MCF 10A (cell line): ENCODE measurements at regions of chr14 and their contacts with region 1.

Region 1: GRCh38 chr14:23478111-23478759 is 8.7 kb downstream of the NGDN start:
- DNase-seq: peak; percentile 58
- H3K4me3 Mint-ChIP-seq: no peak overlapping the region
- H3K27ac Mint-ChIP-seq: no peak overlapping the region
- H3K4me1 Mint-ChIP-seq: peaks cover 5% of the 10 kb centered on the region
- H3K27me3 Mint-ChIP-seq: no peaks in the 10 kb centered on the region
- CTCF ChIP-seq: peak; percentile 59

Region 2: DNA sequence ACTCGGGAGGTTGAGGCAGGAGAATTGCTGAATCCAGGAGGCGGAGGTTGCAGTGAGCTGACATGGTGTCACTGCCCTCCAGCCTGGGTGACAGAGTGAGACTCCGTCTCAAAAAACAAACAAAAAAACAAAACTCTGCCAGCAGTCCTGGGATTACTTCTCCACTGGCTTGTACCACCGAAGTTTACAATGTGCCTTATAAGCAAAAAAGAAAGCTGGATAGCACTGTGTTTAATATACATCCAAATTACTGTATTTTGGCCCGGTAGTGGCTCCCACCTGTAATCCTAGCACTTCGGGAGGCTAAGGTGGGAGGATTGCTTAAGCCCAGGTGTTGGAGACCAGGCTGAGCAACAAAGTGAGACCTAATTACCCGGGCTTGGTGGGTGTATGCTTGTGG is 209.0 kb before region 1 on chr14:
- CTCF ChIA-PET with region 1: interaction called, 6 read pairs
- POLR2A ChIA-PET with region 1: no interaction called
- intact Hi-C with region 1: loop called (anchors 5 kb)
- DNase-seq: no peak
- H3K4me3 Mint-ChIP-seq: no peak overlapping the region
- H3K27ac Mint-ChIP-seq: no peak overlapping the region
- H3K4me1 Mint-ChIP-seq: no peaks in the 10 kb centered on the region
- H3K27me3 Mint-ChIP-seq: no peaks in the 10 kb centered on the region
- CTCF ChIP-seq: no peak

Region 3: GRCh38 chr14:23494223-23494622 is 16.0 kb after region 1 on chr14:
- CTCF ChIA-PET with region 1: interaction called, 11 read pairs
- POLR2A ChIA-PET with region 1: interaction called, 3 read pairs
- intact Hi-C with region 1: no loop called
- DNase-seq: no peak
- H3K4me3 Mint-ChIP-seq: no peak overlapping the region
- H3K27ac Mint-ChIP-seq: no peak overlapping the region
- H3K4me1 Mint-ChIP-seq: no peaks in the 10 kb centered on the region
- H3K27me3 Mint-ChIP-seq: no peaks in the 10 kb centered on the region
- CTCF ChIP-seq: no peak

Region 4: GRCh38 chr14:23539248-23540140 is 61.3 kb after region 1 on chr14:
- CTCF ChIA-PET with region 1: interaction called, 48 read pairs
- POLR2A ChIA-PET with region 1: no interaction called
- intact Hi-C with region 1: no loop called
- DNase-seq: peak; percentile 55
- H3K4me3 Mint-ChIP-seq: no peak overlapping the region
- H3K27ac Mint-ChIP-seq: no peak overlapping the region
- H3K4me1 Mint-ChIP-seq: peaks cover 10% of the 10 kb centered on the region
- H3K27me3 Mint-ChIP-seq: no peaks in the 10 kb centered on the region
- CTCF ChIP-seq: peak; percentile 69

Region 5: GRCh38 chr14:23555882-23556699 is 77.9 kb after region 1 on chr14 and contains the start of gene THTPA:
- CTCF ChIA-PET with region 1: interaction called, 247 read pairs
- POLR2A ChIA-PET with region 1: interaction called, 7 read pairs
- intact Hi-C with region 1: loop called (anchors 1 kb)
- DNase-seq: peak; percentile 89
- H3K4me3 Mint-ChIP-seq: peak within 1 kb of the TSS; percentile 92
- H3K27ac Mint-ChIP-seq: peak within 1 kb of the TSS; percentile 95
- H3K4me1 Mint-ChIP-seq: peaks cover 13% of the 10 kb centered on the region
- H3K27me3 Mint-ChIP-seq: no peaks in the 10 kb centered on the region
- CTCF ChIP-seq: no peak
- total RNA-seq, gene THTPA: 16.8 and 22.4 TPM in 2 replicates